ENCODE measurements at regions of chr13 and their contacts with region 1.

Region 1: DNA sequence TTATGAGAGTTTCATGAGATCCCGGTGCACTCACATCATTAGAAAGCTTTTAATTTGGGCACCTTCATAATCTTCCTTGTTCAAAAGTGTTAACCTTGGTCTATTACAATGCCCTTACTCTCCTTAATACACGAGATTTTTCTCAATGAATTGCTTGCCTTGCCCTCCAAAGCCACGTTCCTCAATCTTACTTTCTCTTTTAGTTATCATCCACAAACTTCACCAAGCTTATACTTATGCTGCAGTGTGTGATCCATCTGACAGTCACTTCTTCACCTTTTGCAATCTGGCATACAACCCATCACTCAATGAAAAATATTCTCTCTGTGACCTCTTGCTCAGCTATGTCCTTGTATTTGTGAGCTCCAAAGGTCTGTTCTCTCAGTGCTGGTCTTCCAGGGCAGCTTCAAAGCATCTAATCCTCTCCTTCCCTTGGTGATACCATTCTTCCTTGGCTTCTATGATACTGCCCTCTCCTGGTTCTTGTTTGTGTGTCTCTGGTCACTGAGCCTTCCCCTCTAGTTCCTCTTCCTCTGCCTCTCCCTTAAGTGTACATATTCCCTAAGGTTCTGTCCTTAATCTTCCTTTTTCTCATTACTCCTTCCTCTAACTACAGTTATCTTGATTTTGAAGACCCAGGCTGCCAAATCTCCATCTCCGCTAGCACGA is 202.2 kb upstream of the STARD13 start:
- DNase-seq: peak; percentile 65
- ATAC-seq: peak; percentile 91
- H3K4me3 ChIP-seq: peak overlapping the region; percentile 8; the same call in 1 of the 2 replicates
- H3K27ac ChIP-seq: no peak overlapping the region
- H3K4me1 ChIP-seq: peaks cover 1% of the 10 kb centered on the region; the same call in 1 of the 2 replicates
- H3K27me3 ChIP-seq: no peaks in the 10 kb centered on the region
- CTCF ChIP-seq: peak; percentile 52
- POLR2A ChIP-seq: no peak
- RAD21 ChIP-seq: peak; percentile 62

Region 2: GRCh38 chr13:33228648-33229445 is 258.9 kb before region 1 on chr13:
- CTCF ChIA-PET with region 1: no interaction called
- POLR2A ChIA-PET with region 1: no interaction called
- dilution Hi-C with region 1: no loop called
- in situ Hi-C with region 1: no loop called
- intact Hi-C with region 1: loop called (anchors 1 kb)
- DNase-seq: peak; percentile 83
- ATAC-seq: peak; percentile 46
- H3K4me3 ChIP-seq: peak overlapping the region; percentile 2; the same call in 1 of the 2 replicates
- H3K27ac ChIP-seq: peak overlapping the region; percentile 97
- H3K4me1 ChIP-seq: peaks cover 29% of the 10 kb centered on the region
- H3K27me3 ChIP-seq: no peaks in the 10 kb centered on the region
- CTCF ChIP-seq: peak; percentile 82
- POLR2A ChIP-seq: 0 out of 2 replicates have a peak, but pooled peaks have one; percentile 27
- RAD21 ChIP-seq: peak; percentile 83

Region 3: GRCh38 chr13:33554919-33555791 is 67.4 kb after region 1 on chr13:
- CTCF ChIA-PET with region 1: no interaction called
- POLR2A ChIA-PET with region 1: no interaction called
- dilution Hi-C with region 1: no loop called
- in situ Hi-C with region 1: no loop called
- intact Hi-C with region 1: no loop called
- DNase-seq: no peak
- ATAC-seq: peak; percentile 77
- H3K4me3 ChIP-seq: no peak overlapping the region
- H3K27ac ChIP-seq: peak overlapping the region; percentile 34; the same call in 1 of the 2 replicates
- H3K4me1 ChIP-seq: peaks cover 4% of the 10 kb centered on the region
- H3K27me3 ChIP-seq: no peaks in the 10 kb centered on the region
- CTCF ChIP-seq: no peak
- POLR2A ChIP-seq: no peak
- RAD21 ChIP-seq: no peak

Measured in IMR-90 (cell line).